MCF 10A (cell line): ENCODE measurements at regions of chr7 and their contacts with region 1.

Region 1: GRCh38 chr7:124723012-124723411 is 42.6 kb downstream of the GPR37 start:
- DNase-seq: peak; percentile 71
- H3K4me3 Mint-ChIP-seq: no peak overlapping the region
- H3K27ac Mint-ChIP-seq: no peak overlapping the region
- H3K4me1 Mint-ChIP-seq: peaks cover 11% of the 10 kb centered on the region
- H3K27me3 Mint-ChIP-seq: no peaks in the 10 kb centered on the region
- CTCF ChIP-seq: no peak

Region 2: DNA sequence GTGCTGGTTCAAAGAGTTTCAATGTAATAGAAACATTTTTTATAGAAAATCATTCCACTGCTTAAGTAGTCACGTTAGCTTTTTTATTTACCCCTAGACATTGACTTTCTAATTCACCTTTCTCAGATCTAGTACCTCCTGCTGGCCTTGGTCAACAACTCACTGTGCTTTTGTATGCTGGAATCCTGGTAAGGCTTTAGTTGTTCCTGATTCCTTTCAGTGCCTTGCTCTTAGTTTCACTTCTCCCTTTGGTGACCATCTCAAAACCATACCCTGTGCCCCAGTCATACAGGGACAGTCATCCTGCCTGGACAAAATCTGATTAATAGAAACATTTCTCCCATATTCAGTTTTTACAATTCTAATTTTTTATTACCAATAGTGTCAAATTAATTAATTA is 87.6 kb before region 1 on chr7:
- CTCF ChIA-PET with region 1: no interaction called
- POLR2A ChIA-PET with region 1: no interaction called
- intact Hi-C with region 1: no loop called
- DNase-seq: no peak
- H3K4me3 Mint-ChIP-seq: no peak overlapping the region
- H3K27ac Mint-ChIP-seq: no peak overlapping the region
- H3K4me1 Mint-ChIP-seq: no peaks in the 10 kb centered on the region
- H3K27me3 Mint-ChIP-seq: no peaks in the 10 kb centered on the region
- CTCF ChIP-seq: no peak

Region 3: GRCh38 chr7:124701955-124702354 is 21.1 kb before region 1 on chr7:
- CTCF ChIA-PET with region 1: interaction called, 4 read pairs
- POLR2A ChIA-PET with region 1: interaction called, 36 read pairs
- intact Hi-C with region 1: no loop called
- DNase-seq: peak; percentile 84
- H3K4me3 Mint-ChIP-seq: peak overlapping the region; percentile 3
- H3K27ac Mint-ChIP-seq: peak overlapping the region; percentile 8
- H3K4me1 Mint-ChIP-seq: peaks cover 25% of the 10 kb centered on the region
- H3K27me3 Mint-ChIP-seq: no peaks in the 10 kb centered on the region
- CTCF ChIP-seq: no peak

Region 4: GRCh38 chr7:124712017-124712416 is 11.0 kb before region 1 on chr7:
- CTCF ChIA-PET with region 1: no interaction called
- POLR2A ChIA-PET with region 1: interaction called, 14 read pairs
- intact Hi-C with region 1: no loop called
- DNase-seq: no peak
- H3K4me3 Mint-ChIP-seq: no peak overlapping the region
- H3K27ac Mint-ChIP-seq: no peak overlapping the region
- H3K4me1 Mint-ChIP-seq: peaks cover 6% of the 10 kb centered on the region
- H3K27me3 Mint-ChIP-seq: no peaks in the 10 kb centered on the region
- CTCF ChIP-seq: no peak

Region 5: DNA sequence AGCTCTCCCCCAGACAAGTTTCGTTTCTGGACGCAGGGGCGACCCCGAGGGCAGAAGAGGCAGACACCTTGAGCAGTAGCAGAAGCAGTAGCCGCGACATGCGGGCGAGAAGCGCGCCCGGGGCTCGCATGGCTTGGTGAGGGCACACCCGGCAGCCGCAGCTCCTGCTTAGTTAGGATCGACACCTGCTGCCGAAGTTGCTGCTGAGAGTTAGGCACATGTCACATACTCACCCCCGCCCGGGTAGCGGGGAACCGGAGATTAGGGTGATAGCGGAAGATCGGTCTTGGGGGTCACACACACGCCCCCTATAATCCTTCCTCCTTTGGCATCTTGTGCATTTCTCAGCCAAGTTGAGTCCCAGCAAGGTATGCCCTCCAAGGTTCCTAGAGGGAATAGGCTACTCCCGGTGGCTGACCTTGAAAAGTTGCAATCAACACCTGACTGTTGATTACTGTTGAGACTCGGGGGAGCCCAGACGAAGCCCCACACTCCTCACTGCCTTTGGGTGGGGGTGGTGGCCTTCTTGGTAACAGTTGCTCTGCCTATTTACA is 41.9 kb after region 1 on chr7:
- CTCF ChIA-PET with region 1: no interaction called
- POLR2A ChIA-PET with region 1: no interaction called
- intact Hi-C with region 1: no loop called
- DNase-seq: peak; percentile 39
- H3K4me3 Mint-ChIP-seq: peak overlapping the region; percentile 75
- H3K27ac Mint-ChIP-seq: peak overlapping the region; percentile 73
- H3K4me1 Mint-ChIP-seq: peaks cover 12% of the 10 kb centered on the region
- H3K27me3 Mint-ChIP-seq: no peaks in the 10 kb centered on the region
- CTCF ChIP-seq: no peak